Cardiac septum (tissue), 1 donor: ENCODE measurements at regions of chr16 and their contacts with region 1.

Region 1: GRCh38 chr16:2267913-2268666 is at the start of gene RNPS1:
- DNase-seq: peak; percentile 96
- total RNA-seq, gene RNPS1: 106 TPM

Region 2: GRCh38 chr16:2513405-2514322 is 245.6 kb after region 1 on chr16 and contains the start of gene ATP6V0C:
- intact Hi-C with region 1: loop called (anchors 10 kb)
- DNase-seq: peak; percentile 95
- total RNA-seq, gene ATP6V0C: 137 TPM

Region 3: GRCh38 chr16:2799866-2800239 is 531.8 kb after region 1 on chr16:
- intact Hi-C with region 1: no loop called
- DNase-seq: no peak